Common myeloid progenitor, CD34-positive (primary cell): ENCODE measurements at regions of chr3 and their contacts with region 1.

Region 1: GRCh38 chr3:129942296-129942695 is 32.2 kb upstream of the TRH start:
- DNase-seq: peak; percentile 72 to 82 (median 73)
- H3K4me3 ChIP-seq: no peak overlapping the region
- H3K27ac ChIP-seq: no peak overlapping the region
- H3K4me1 ChIP-seq: peaks cover 1 to 15% (median 4%) of the 10 kb centered on the region in 4 experiments
- H3K27me3 ChIP-seq: no peaks in the 10 kb centered on the region

Region 2: DNA sequence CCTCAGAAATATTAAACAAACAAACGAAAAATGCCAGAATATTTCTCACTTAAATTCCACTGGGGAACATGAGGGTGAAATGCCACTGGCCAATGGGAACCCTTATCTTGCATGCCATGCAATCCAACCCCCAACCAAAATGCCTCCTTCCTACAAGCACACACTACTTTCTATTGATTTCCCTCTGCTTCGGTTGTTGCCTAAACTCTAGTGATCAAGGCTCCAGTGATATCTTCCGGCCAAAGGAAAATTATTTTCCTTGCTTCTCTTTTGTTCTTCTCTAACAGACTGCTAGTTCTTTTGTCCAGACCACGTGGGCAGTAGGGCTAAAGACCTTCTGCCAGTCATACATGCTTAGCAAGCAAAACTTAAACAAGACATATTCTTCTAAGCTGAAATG is 164.5 kb before region 1 on chr3:
- CTCF ChIA-PET with region 1: no interaction called
- POLR2A ChIA-PET with region 1: no interaction called
- DNase-seq: no peak
- H3K4me3 ChIP-seq: no peak overlapping the region
- H3K27ac ChIP-seq: no peak overlapping the region
- H3K4me1 ChIP-seq: no peaks in the 10 kb centered on the region
- H3K27me3 ChIP-seq: no peaks in the 10 kb centered on the region

Region 3: DNA sequence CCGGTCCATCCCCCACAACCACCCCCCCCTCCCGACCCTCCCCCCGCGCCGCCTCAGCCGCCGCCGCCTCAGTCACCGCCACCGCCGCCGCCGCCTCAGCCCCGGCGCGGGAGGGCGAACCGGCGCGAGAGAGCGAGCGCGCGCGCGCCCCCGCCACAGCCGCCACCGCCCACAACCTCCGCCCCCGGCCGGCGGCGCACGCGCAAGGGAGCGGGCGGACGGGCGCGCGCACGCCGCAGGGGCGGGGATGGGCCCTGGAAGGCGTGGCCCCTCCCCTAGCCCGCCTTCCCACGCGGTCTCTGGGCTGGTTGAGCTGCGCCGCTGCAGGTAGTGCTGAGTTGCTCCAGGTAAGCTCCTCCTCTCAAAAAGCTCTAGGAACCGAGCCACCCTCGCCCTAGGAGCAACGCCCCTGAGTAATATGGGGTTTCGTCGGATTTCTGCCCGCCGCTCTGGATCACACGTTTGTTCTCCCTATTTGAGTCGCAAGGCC is 48.7 kb before region 1 on chr3 and contains the start of gene TMCC1:
- CTCF ChIA-PET with region 1: no interaction called
- POLR2A ChIA-PET with region 1: no interaction called
- DNase-seq: peak; percentile 84 to 92 (median 91)
- H3K4me3 ChIP-seq: peak within 1 kb of the TSS; percentile 78 to 94 (median 90)
- H3K27ac ChIP-seq: peak within 1 kb of the TSS; percentile 72 to 92
- H3K4me1 ChIP-seq: peaks cover 28 to 56% (median 42%) of the 10 kb centered on the region in 4 experiments
- H3K27me3 ChIP-seq: no peaks in the 10 kb centered on the region

Region 4: GRCh38 chr3:129927072-129927471 is 15.2 kb before region 1 on chr3:
- CTCF ChIA-PET with region 1: interaction called, 20 read pairs
- POLR2A ChIA-PET with region 1: no interaction called
- DNase-seq: no peak
- H3K4me3 ChIP-seq: no peak overlapping the region
- H3K27ac ChIP-seq: no peak overlapping the region
- H3K4me1 ChIP-seq: no peaks in the 10 kb centered on the region
- H3K27me3 ChIP-seq: no peaks in the 10 kb centered on the region

Region 5: GRCh38 chr3:129984125-129984524 is 41.8 kb after region 1 on chr3:
- CTCF ChIA-PET with region 1: interaction called, 69 read pairs
- POLR2A ChIA-PET with region 1: no interaction called
- DNase-seq: no peak
- H3K4me3 ChIP-seq: no peak overlapping the region
- H3K27ac ChIP-seq: no peak overlapping the region
- H3K4me1 ChIP-seq: peaks cover 0 to 4% (median 1%) of the 10 kb centered on the region in 4 experiments
- H3K27me3 ChIP-seq: no peaks in the 10 kb centered on the region

Region 6: DNA sequence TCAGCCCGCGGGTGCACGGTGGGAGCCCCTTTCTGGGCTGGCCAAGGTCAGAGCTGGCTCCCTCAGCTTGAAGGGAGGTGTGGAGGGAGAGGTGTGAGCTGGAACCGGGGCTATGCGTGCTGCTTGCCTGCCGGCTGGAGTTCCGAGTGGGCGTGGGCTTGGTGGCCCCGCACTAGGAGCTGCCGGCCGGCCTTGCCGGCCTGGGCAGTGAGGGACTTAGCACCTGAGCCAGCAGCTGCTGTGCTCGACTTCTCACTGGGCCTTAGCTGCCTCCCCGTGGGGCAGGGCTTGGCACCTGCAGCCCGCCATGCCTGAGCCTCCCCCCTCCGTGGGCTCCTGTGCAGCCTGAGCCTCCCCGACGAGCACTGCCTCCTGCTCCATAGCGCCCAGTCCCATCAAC is 68.3 kb after region 1 on chr3:
- CTCF ChIA-PET with region 1: interaction called, 11 read pairs
- POLR2A ChIA-PET with region 1: no interaction called
- DNase-seq: no peak
- H3K4me3 ChIP-seq: no peak overlapping the region
- H3K27ac ChIP-seq: no peak overlapping the region
- H3K4me1 ChIP-seq: no peaks in the 10 kb centered on the region
- H3K27me3 ChIP-seq: no peaks in the 10 kb centered on the region

Region 7: GRCh38 chr3:130093741-130094391 is 151.6 kb after region 1 on chr3:
- CTCF ChIA-PET with region 1: interaction called, 104 read pairs
- POLR2A ChIA-PET with region 1: interaction called, 6 read pairs
- DNase-seq: peak; percentile 59 to 83 (median 80)
- H3K4me3 ChIP-seq: peak overlapping the region in 6 of 7 experiments; percentile 38 to 68 (median 51)
- H3K27ac ChIP-seq: no peak overlapping the region
- H3K4me1 ChIP-seq: peaks cover 0 to 41% (median 26%) of the 10 kb centered on the region in 4 experiments
- H3K27me3 ChIP-seq: no peaks in the 10 kb centered on the region